Activated naive CD4-positive, alpha-beta T cell treated with anti-CD3 and anti-CD28 coated beads for 36 hours (primary cell): ENCODE measurements at regions of chr14 and their contacts with region 1.

Region 1: GRCh38 chr14:105617201-105617777 is 90.9 kb downstream of the TMEM121 start:
- DNase-seq: peak; percentile 21
- H3K4me3 Mint-ChIP-seq: no peak overlapping the region
- H3K27ac Mint-ChIP-seq: no peak overlapping the region
- H3K4me1 Mint-ChIP-seq: no peaks in the 10 kb centered on the region
- H3K27me3 Mint-ChIP-seq: no peaks in the 10 kb centered on the region

Region 2: DNA sequence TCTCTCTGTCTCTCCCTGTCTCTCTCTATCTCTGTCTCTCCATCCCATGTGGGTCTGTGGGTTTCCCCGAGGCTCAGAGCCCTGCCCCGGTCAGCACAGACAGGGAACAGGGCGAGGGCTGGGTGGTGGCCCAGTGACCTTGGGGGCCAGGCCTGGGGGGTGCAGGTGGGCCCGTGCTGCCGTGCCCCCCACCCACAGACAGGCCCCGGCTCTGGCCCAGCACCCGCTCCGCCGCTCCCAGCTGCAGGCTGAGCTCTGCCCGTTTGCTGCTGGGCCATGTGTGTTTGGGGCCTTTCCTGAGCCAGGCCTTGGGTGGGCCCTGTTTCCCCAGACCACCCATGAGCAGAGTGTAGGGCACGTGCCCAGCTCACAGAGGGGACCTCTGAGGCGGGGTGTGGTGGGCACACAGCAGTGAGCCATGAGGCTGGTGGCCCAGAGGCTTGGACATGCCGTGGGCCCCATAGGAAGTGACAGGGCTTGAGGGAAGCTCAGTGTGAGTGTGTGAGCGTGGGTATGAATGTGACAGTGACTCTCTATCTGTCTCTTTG is 39.9 kb before region 1 on chr14:
- CTCF ChIA-PET with region 1: no interaction called
- intact Hi-C with region 1: no loop called
- DNase-seq: no peak
- H3K4me3 Mint-ChIP-seq: no peak overlapping the region
- H3K27ac Mint-ChIP-seq: no peak overlapping the region
- H3K4me1 Mint-ChIP-seq: no peaks in the 10 kb centered on the region
- H3K27me3 Mint-ChIP-seq: no peaks in the 10 kb centered on the region

Region 3: GRCh38 chr14:105760691-105761346 is 143.5 kb after region 1 on chr14:
- CTCF ChIA-PET with region 1: no interaction called
- intact Hi-C with region 1: loop called (anchors 5 kb)
- DNase-seq: no peak
- H3K4me3 Mint-ChIP-seq: no peak overlapping the region
- H3K27ac Mint-ChIP-seq: no peak overlapping the region
- H3K4me1 Mint-ChIP-seq: no peaks in the 10 kb centered on the region
- H3K27me3 Mint-ChIP-seq: no peaks in the 10 kb centered on the region

Region 4: GRCh38 chr14:106134886-106135285 is 517.6 kb after region 1 on chr14:
- CTCF ChIA-PET with region 1: no interaction called
- intact Hi-C with region 1: no loop called
- DNase-seq: no peak
- H3K4me3 Mint-ChIP-seq: no peak overlapping the region
- H3K27ac Mint-ChIP-seq: no peak overlapping the region
- H3K4me1 Mint-ChIP-seq: peaks cover 30% of the 10 kb centered on the region
- H3K27me3 Mint-ChIP-seq: no peaks in the 10 kb centered on the region